ENCODE measurements at regions of chr6 and their contacts with region 1.

Region 1: DNA sequence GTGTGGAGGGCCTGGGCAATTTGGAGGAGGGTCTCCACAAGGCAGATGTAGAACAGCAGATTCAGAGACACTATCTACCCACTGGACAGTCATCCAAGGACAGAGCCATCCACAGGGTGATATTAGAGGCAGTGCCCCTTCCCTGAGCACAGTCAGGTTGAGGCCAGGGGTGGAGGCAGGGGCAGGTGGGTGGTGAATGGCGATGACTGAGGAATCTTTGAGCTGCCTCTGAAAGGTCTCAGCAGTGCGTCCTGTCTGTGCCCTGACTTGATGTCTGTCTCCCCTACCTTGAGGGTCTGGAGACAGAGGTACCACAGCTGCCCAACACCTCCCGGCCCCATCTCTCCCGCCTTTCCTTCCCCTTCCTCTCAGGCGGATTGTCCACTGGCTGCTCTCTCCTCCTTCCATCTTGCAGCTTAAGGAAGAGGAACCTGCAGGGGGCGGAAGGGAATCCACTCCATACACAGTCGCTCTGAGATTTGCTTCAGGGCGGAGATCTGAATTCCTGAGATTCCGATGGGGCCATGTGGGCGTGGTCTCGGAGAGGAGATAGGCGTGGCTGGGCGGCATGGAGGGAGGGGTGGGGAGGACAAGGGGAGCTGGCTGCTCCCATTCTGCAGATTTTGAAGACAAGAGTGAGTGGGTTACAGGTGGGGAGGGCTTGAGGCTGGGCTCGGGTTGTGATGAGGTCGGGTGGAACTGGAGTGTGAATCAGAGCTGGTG is 1.7 kb downstream of the MUCL3 start:
- DNase-seq: peak; percentile 66
- H3K4me3 ChIP-seq: no peak overlapping the region
- H3K27ac ChIP-seq: no peak overlapping the region
- H3K4me1 ChIP-seq: peaks cover 21% of the 10 kb centered on the region
- H3K27me3 ChIP-seq: no peaks in the 10 kb centered on the region
- CTCF ChIP-seq: peak; percentile 48 to 71

Region 2: DNA sequence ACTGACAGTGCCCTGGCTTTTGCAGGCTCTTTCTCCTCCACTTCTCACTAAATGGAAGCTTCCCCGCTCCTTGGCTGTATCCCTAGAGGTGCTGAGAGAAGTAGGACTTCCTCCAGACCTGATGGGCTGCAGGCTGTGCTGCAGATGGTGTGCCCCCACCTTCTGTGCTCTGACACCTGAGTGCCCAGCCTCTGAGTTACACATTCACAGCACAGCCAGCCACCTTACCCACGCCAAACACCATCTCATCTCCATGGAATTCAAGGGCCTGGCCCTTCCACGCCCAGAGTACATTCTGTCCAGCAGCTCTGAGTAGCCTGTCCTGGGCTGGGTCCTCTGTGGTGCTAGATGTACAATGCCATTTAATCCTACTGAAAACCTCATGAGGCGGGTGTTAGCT is 15.9 kb before region 1 on chr6:
- CTCF ChIA-PET with region 1: interaction called, 32 read pairs
- dilution Hi-C with region 1: no loop called
- in situ Hi-C with region 1: no loop called
- intact Hi-C with region 1: no loop called
- DNase-seq: peak; percentile 43
- H3K4me3 ChIP-seq: no peak overlapping the region
- H3K27ac ChIP-seq: peak overlapping the region; percentile 69
- H3K4me1 ChIP-seq: peaks cover 49% of the 10 kb centered on the region
- H3K27me3 ChIP-seq: no peaks in the 10 kb centered on the region
- CTCF ChIP-seq: no peak

Region 3: DNA sequence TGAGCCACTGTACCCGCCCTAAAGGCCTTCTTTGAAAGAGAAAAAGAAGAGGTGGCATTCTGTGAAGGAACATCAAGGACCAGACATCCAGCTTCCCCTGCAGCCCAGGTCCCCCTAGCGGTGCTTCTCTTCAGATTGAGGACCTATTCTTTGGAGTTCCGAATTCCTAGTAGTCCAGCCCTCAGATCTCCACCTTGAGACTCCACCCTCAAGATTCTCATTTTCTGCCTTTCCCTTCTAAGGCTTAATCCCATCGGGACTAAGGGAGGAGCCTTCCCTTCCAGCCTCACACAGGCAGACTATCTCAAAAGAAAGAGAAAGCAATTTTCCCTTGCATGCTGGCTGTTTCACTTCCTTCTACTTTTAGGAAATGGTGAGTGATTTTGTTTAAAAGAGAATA is 100.3 kb after region 1 on chr6:
- CTCF ChIA-PET with region 1: interaction called, 3 read pairs
- dilution Hi-C with region 1: no loop called
- in situ Hi-C with region 1: no loop called
- intact Hi-C with region 1: loop called (anchors 1 kb)
- DNase-seq: peak; percentile 57
- H3K4me3 ChIP-seq: no peak overlapping the region
- H3K27ac ChIP-seq: no peak overlapping the region
- H3K4me1 ChIP-seq: no peaks in the 10 kb centered on the region
- H3K27me3 ChIP-seq: no peaks in the 10 kb centered on the region
- CTCF ChIP-seq: peak; percentile 26 to 61

Region 4: GRCh38 chr6:31128093-31128676 is 185.7 kb after region 1 on chr6:
- CTCF ChIA-PET with region 1: interaction called, 11 read pairs
- dilution Hi-C with region 1: no loop called
- in situ Hi-C with region 1: no loop called
- intact Hi-C with region 1: no loop called
- DNase-seq: peak; percentile 46
- H3K4me3 ChIP-seq: no peak overlapping the region
- H3K27ac ChIP-seq: no peak overlapping the region
- H3K4me1 ChIP-seq: peaks cover 38% of the 10 kb centered on the region
- H3K27me3 ChIP-seq: no peaks in the 10 kb centered on the region
- CTCF ChIP-seq: peak; percentile 82 to 90

Region 5: GRCh38 chr6:31203345-31203979 is 261.0 kb after region 1 on chr6:
- CTCF ChIA-PET with region 1: interaction called, 53 read pairs
- dilution Hi-C with region 1: no loop called
- in situ Hi-C with region 1: no loop called
- intact Hi-C with region 1: no loop called
- DNase-seq: peak; percentile 85
- H3K4me3 ChIP-seq: peak overlapping the region; percentile 45 to 66 (median 49)
- H3K27ac ChIP-seq: peak overlapping the region; percentile 90
- H3K4me1 ChIP-seq: peaks cover 21% of the 10 kb centered on the region
- H3K27me3 ChIP-seq: no peaks in the 10 kb centered on the region
- CTCF ChIP-seq: no peak